ENCODE measurements at regions of chr12 and their contacts with region 1.

Region 1: DNA sequence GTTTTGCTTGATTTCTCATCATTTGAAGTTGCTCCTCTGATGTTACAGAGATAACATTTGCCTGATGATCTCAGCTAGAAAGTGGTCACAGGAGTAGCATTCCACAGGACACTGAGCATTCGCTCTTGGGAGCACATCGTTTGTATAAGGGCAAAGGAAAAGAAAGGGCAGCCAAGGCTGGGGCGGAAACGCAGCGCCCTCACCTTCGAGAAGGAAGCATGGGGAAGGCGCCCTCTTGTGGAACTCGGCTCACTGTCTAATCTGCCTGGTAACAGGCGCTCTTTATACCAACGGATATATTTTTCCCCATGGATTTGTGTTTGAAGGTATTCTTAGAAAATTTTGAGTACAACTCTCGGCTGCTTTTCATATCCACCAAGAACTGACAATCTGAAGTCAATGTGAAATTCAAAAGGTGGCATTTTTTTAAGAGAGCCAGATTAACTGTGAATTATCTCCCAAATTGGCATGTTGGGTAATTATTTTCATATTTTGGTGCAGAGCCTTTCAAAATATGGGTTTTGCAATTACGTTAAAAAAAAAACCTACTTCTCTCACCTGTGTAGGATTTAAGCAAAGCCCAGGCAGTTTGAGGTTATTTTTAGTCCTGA is 172.7 kb downstream of the CAND1 start:
- DNase-seq: peak; percentile 50 to 76 (median 72)
- ATAC-seq: peak; percentile 94
- H3K4me3 ChIP-seq: no peak overlapping the region
- H3K4me3 Mint-ChIP-seq: peak overlapping the region in 9 of 10 donors; percentile 29 to 78 (median 59)
- H3K27ac ChIP-seq: no peak overlapping the region
- H3K27ac Mint-ChIP-seq: peak overlapping the region in 8 of 9 donors; percentile 17 to 93 (median 53)
- H3K4me1 ChIP-seq: peaks cover 5 to 7% of the 10 kb centered on the region in 2 donors
- H3K4me1 Mint-ChIP-seq: peaks cover 8 to 38% (median 34%) of the 10 kb centered on the region in 7 donors
- H3K27me3 ChIP-seq: no peaks in the 10 kb centered on the region
- H3K27me3 Mint-ChIP-seq: peaks cover 0 to 8% (median 0%) of the 10 kb centered on the region in 5 donors

Region 2: DNA sequence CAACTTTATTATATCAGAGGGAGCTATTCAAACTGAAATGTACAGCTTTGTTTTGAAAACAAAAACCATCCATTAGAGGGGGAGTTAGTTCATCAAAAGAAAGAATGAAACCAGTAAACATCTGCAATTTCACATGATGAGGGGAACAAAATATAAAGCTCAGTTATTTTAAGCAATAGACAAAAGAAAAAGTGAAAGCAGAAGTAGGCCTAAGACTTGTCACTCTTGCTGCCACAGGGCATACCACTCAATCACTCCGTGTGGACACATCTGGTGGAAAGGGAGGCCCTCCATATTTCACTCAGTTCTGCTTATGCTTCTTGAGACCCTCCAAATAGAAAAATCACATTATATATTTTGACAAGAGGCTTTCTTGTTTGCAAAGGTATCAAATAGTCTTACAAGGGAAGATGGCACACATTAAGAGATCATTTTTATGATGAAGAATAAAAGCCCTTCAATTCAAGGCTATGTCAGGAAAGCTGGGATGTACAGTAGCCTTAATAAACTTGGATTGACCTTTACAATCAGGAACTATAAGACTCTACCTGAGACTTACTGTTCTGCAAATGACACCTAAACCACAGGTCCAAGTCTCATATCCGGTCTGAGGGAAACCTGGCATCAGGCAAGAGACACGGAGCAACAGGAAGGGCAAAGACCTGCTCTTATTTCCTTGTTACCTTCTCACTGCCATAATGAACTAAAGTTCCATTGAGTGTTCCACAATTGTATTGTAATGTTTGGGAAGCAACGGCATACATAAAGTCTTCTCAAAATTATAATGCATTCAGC is 540.5 kb before region 1 on chr12:
- CTCF ChIA-PET with region 1: no interaction called
- POLR2A ChIA-PET with region 1: no interaction called
- intact Hi-C with region 1: loop called in 1 of 2 experiments (anchors 5 kb)
- DNase-seq: peak in 1 of 9 donors; percentile 4
- ATAC-seq: peak; percentile 69
- H3K4me3 ChIP-seq: no peak overlapping the region
- H3K4me3 Mint-ChIP-seq: peak overlapping the region in 9 of 10 donors; percentile 14 to 78 (median 69)
- H3K27ac ChIP-seq: peak overlapping the region; percentile 44
- H3K27ac Mint-ChIP-seq: peak overlapping the region in 8 of 9 donors; percentile 34 to 84 (median 67)
- H3K4me1 ChIP-seq: peaks cover 0 to 20% of the 10 kb centered on the region in 2 donors
- H3K4me1 Mint-ChIP-seq: peaks cover 14 to 52% (median 47%) of the 10 kb centered on the region in 7 donors
- H3K27me3 ChIP-seq: no peaks in the 10 kb centered on the region
- H3K27me3 Mint-ChIP-seq: peaks cover 0 to 4% (median 0%) of the 10 kb centered on the region in 5 donors

Region 3: GRCh38 chr12:67161322-67161918 is 280.4 kb before region 1 on chr12:
- CTCF ChIA-PET with region 1: no interaction called
- POLR2A ChIA-PET with region 1: no interaction called
- intact Hi-C with region 1: loop called (anchors 2 kb)
- DNase-seq: peak in 7 of 9 donors; percentile 8 to 27 (median 21)
- ATAC-seq: no peak
- H3K4me3 ChIP-seq: no peak overlapping the region
- H3K4me3 Mint-ChIP-seq: no peak overlapping the region
- H3K27ac ChIP-seq: no peak overlapping the region
- H3K27ac Mint-ChIP-seq: no peak overlapping the region
- H3K4me1 ChIP-seq: no peaks in the 10 kb centered on the region
- H3K4me1 Mint-ChIP-seq: peaks cover 0 to 3% (median 0%) of the 10 kb centered on the region in 7 donors
- H3K27me3 ChIP-seq: no peaks in the 10 kb centered on the region
- H3K27me3 Mint-ChIP-seq: peaks cover 0 to 6% (median 4%) of the 10 kb centered on the region in 5 donors

Region 4: DNA sequence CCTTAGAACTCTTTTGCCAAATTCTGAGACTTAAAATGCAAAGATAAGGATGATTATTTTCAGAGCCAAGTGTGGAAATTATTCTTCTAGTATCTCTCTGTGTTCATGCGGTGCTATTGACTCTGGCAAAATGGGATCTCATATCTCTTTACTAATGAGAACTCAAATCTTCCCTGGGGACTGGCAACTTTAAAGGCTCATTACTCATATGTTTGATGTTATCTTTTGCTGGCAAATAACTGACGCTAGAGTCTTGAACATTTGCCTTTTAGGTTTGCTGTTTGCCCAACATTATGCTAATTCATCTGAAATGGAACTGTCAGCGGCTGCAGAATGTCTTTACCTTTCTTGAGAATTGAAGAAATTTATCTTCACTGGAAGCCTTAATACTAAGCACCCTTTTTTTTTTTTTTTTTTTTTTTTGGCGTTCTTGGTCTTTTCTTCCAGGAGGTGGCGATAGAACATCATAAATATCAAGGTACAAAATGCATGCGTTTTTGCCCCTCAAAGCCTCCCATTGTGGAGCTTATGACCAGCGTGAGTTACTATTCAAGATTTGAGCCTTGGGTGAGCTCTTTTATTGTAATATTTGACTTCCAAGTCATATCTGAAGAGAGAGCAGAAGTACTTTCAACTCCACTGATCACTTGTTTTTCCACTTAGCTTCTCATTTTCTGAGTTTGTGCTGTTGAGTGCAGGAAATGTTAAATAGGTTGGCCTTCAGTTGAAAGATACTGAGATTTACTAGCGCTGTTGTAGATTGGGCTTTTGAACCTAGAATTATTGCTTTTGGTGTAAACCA is 86.1 kb before region 1 on chr12:
- CTCF ChIA-PET with region 1: interaction called, 15 read pairs
- POLR2A ChIA-PET with region 1: no interaction called
- intact Hi-C with region 1: loop called (anchors 1 to 2 kb)
- DNase-seq: peak in 7 of 9 donors; percentile 27 to 68 (median 61)
- ATAC-seq: peak; percentile 70
- H3K4me3 ChIP-seq: no peak overlapping the region
- H3K4me3 Mint-ChIP-seq: peak overlapping the region in 7 of 10 donors; percentile 23 to 65 (median 51)
- H3K27ac ChIP-seq: no peak overlapping the region
- H3K27ac Mint-ChIP-seq: peak overlapping the region in 3 of 9 donors; percentile 42 to 63 (median 54)
- H3K4me1 ChIP-seq: peaks cover 0 to 5% of the 10 kb centered on the region in 2 donors
- H3K4me1 Mint-ChIP-seq: peaks cover 2 to 21% (median 16%) of the 10 kb centered on the region in 7 donors
- H3K27me3 ChIP-seq: no peaks in the 10 kb centered on the region
- H3K27me3 Mint-ChIP-seq: no peaks in the 10 kb centered on the region

Region 5: GRCh38 chr12:67482751-67483671 is 41.2 kb after region 1 on chr12:
- CTCF ChIA-PET with region 1: interaction called, 6 read pairs
- POLR2A ChIA-PET with region 1: no interaction called
- intact Hi-C with region 1: loop called in 1 of 2 experiments (anchors 1 kb)
- DNase-seq: peak in 8 of 9 donors; percentile 47 to 89 (median 82)
- ATAC-seq: peak; percentile 89
- H3K4me3 ChIP-seq: no peak overlapping the region
- H3K4me3 Mint-ChIP-seq: peak overlapping the region in 9 of 10 donors; percentile 1 to 61 (median 26)
- H3K27ac ChIP-seq: peak overlapping the region; percentile 49
- H3K27ac Mint-ChIP-seq: peak overlapping the region; percentile 41 to 91 (median 82)
- H3K4me1 ChIP-seq: peaks cover 39 to 45% of the 10 kb centered on the region in 2 donors
- H3K4me1 Mint-ChIP-seq: peaks cover 28 to 49% (median 46%) of the 10 kb centered on the region in 7 donors
- H3K27me3 ChIP-seq: no peaks in the 10 kb centered on the region
- H3K27me3 Mint-ChIP-seq: no peaks in the 10 kb centered on the region

Region 6: DNA sequence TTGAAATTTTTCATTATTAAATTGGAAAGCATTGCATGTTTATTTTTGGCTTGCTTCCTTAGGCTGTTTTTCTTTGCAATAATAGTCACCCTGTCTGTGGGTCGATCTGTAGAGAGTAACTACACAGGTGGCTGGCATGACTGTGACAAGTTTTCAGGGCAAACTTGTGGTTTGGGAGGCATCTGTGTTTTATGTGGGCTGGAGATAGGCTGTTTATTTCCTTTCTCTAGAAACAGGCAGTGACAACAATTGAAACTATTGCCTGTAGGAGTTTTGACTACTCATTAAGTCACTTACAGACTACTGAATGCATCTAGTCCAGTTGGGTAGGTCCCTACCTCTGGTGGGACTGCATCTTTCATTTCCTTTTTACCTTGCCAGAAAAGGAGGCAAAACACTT is 362.3 kb after region 1 on chr12:
- CTCF ChIA-PET with region 1: no interaction called
- POLR2A ChIA-PET with region 1: no interaction called
- intact Hi-C with region 1: loop called in 1 of 2 experiments (anchors 10 kb)
- DNase-seq: peak in 8 of 9 donors; percentile 29 to 87 (median 62)
- ATAC-seq: peak; percentile 93
- H3K4me3 ChIP-seq: no peak overlapping the region
- H3K4me3 Mint-ChIP-seq: no peak overlapping the region
- H3K27ac ChIP-seq: no peak overlapping the region
- H3K27ac Mint-ChIP-seq: no peak overlapping the region
- H3K4me1 ChIP-seq: peaks cover 18 to 28% of the 10 kb centered on the region in 2 donors
- H3K4me1 Mint-ChIP-seq: peaks cover 4 to 24% (median 7%) of the 10 kb centered on the region in 7 donors
- H3K27me3 ChIP-seq: no peaks in the 10 kb centered on the region
- H3K27me3 Mint-ChIP-seq: peaks cover 0 to under 1% (median 0%) of the 10 kb centered on the region in 5 donors